HEK293T (cell line): ENCODE measurements at regions of chr22 and their contacts with region 1.

Region 1: GRCh38 chr22:27919222-27919941 is at the start of gene PITPNB:
- DNase-seq: peak; percentile 100

Region 2: DNA sequence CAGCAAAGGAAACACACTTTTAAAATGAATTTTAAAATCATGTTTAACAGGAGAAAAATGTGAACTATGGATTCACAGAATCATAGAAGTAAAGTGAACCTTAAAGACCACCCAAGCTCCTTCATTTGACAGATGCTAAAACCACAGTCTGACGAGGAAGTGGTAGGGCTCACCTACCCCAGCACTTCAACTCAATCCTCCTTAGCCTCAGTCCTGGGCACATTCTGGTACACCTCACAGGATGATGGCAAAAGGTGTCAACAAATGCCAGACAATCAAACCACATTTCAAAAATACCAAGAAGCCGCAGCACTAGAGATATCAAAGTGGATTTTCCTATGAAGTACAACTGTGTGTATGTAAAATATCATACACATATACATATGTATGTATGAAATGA is 43.4 kb before region 1 on chr22:
- CTCF ChIA-PET with region 1: no interaction called
- POLR2A ChIA-PET with region 1: no interaction called
- DNase-seq: no peak

Region 3: GRCh38 chr22:27885977-27886842 is 33.2 kb before region 1 on chr22:
- CTCF ChIA-PET with region 1: interaction called, 5 read pairs
- POLR2A ChIA-PET with region 1: interaction called, 19 read pairs
- DNase-seq: peak; percentile 57

Region 4: DNA sequence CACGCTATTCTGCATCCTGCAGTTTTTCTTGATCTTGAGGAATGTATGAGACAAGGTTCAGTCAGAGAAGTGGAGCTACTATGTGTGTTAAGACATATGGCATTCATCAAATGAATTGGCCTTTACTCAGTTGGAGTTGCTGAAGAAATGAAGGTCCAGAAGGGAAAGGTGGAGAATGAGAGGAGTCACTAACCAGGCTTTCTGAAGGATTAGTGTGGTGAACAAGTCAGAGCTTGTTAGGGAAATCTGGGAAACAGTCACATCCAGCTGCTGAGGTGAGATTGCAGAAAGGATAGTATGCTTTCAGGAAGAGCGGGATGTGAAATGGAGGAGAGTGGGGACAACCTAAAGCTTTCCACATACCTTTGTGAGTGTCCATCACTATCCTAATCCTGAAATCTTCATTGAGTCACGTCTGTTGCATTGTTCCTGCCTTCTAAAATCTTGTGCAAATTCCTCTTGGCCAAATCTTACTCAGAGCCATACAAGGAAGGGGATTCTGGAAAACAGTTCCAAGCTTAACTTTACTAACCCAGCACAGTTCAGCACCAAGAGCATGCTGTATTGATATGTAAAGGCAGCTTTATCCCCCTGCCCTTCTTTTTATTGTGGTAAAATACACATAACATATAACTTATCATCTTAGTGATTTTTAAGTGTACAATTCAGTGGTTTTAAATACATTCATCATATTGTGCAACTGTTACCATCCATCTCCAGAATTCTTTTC is 11.1 kb after region 1 on chr22:
- CTCF ChIA-PET with region 1: no interaction called
- POLR2A ChIA-PET with region 1: interaction called, 38 read pairs
- DNase-seq: no peak

Region 5: GRCh38 chr22:27937453-27937852 is 18.1 kb after region 1 on chr22:
- CTCF ChIA-PET with region 1: no interaction called
- POLR2A ChIA-PET with region 1: interaction called, 38 read pairs
- DNase-seq: no peak

Region 6: GRCh38 chr22:27959335-27960090 is 40.1 kb after region 1 on chr22:
- CTCF ChIA-PET with region 1: interaction called, 3 read pairs
- POLR2A ChIA-PET with region 1: interaction called, 10 read pairs
- DNase-seq: no peak